ENCODE measurements at regions of chr21 and their contacts with region 1.

Region 1: GRCh38 chr21:44927587-44928461 is 7.1 kb upstream of the ITGB2 start:
- DNase-seq: peak; percentile 81
- CTCF ChIP-seq: no peak

Region 2: GRCh38 chr21:44801468-44802395 is 126.1 kb before region 1 on chr21 and contains the start of gene UBE2G2:
- CTCF ChIA-PET with region 1: interaction called, 26 read pairs
- POLR2A ChIA-PET with region 1: no interaction called
- DNase-seq: peak; percentile 97
- CTCF ChIP-seq: no peak

Region 3: GRCh38 chr21:44892536-44893277 is 35.1 kb before region 1 on chr21:
- CTCF ChIA-PET with region 1: interaction called, 104 read pairs
- POLR2A ChIA-PET with region 1: interaction called, 3 read pairs
- DNase-seq: peak; percentile 83
- CTCF ChIP-seq: peak; percentile 88

Region 4: DNA sequence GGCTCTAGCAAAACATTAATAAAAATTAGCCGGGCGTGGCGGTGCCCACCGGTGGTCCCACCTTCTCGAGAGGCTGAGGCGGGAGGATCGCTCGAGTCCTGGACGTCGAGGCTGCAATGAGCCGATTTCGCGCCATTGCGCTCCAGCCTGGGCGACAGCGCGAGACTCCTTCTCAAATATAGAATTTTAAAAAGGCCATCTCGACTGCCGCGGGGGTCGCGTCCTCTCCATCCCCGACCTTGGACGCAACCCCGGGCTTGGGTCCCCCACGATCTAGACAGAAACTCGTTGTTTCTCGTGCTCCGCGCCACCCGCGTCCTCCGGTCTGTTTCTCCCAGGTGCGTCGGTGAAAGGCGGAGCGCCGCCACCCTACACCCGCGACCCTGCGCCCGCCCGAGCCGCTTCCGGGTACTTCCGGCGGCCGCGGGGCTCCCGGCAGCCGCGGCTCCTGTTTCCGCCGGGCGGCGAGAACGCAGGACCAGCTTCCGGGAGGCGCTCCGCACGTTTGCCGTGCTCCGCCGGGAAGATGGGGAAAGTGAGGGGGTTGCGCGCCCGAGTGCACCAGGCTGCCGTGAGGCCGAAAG is 11.8 kb after region 1 on chr21 and contains the start of gene SLX9:
- CTCF ChIA-PET with region 1: interaction called, 8 read pairs
- POLR2A ChIA-PET with region 1: interaction called, 12 read pairs
- DNase-seq: peak; percentile 93
- CTCF ChIP-seq: no peak

Measured in GM10248 (cell line).